Esophagus muscularis mucosa (tissue), 4 donors: ENCODE measurements at regions of chr11 and their contacts with region 1.

Region 1: GRCh38 chr11:30196400-30197206 is 34.2 kb upstream of the FSHB start:
- DNase-seq: no peak
- H3K4me3 ChIP-seq: no peak overlapping the region
- H3K27ac ChIP-seq: no peak overlapping the region
- H3K4me1 ChIP-seq: peaks cover 0 to 14% (median 2%) of the 10 kb centered on the region in 4 donors
- H3K27me3 ChIP-seq: no peaks in the 10 kb centered on the region
- CTCF ChIP-seq: peak; percentile 57 to 80 (median 77)
- EP300 ChIP-seq: no peak
- POLR2A ChIP-seq: no peak

Region 2: GRCh38 chr11:29432719-29433325 is 763.8 kb before region 1 on chr11:
- intact Hi-C with region 1: loop called (anchors 10 kb)
- DNase-seq: no peak
- H3K4me3 ChIP-seq: no peak overlapping the region
- H3K27ac ChIP-seq: no peak overlapping the region
- H3K4me1 ChIP-seq: no peaks in the 10 kb centered on the region
- H3K27me3 ChIP-seq: no peaks in the 10 kb centered on the region
- CTCF ChIP-seq: peak; percentile 41 to 55 (median 53)
- EP300 ChIP-seq: no peak
- POLR2A ChIP-seq: no peak

Region 3: DNA sequence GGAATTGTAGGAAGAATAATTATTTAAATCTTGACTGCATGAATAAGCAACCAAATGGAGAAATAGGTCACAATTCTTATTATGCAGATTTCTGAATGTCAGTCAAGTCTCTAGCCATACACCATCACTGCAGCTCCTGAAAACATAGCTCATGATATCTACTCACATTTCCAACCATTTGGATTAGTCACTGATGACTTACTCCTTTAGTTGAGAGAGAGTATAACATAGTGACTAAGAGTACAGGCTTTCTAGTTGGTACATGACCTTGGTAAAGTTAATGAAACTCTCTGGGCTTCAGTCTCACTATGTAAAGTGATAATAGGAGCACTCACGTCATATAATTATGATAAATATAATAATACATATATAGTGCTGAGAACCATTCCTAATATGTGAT is 445.0 kb before region 1 on chr11:
- intact Hi-C with region 1: no loop called
- DNase-seq: no peak
- H3K4me3 ChIP-seq: no peak overlapping the region
- H3K27ac ChIP-seq: no peak overlapping the region
- H3K4me1 ChIP-seq: no peaks in the 10 kb centered on the region
- H3K27me3 ChIP-seq: no peaks in the 10 kb centered on the region
- CTCF ChIP-seq: no peak
- EP300 ChIP-seq: no peak
- POLR2A ChIP-seq: no peak

Region 4: DNA sequence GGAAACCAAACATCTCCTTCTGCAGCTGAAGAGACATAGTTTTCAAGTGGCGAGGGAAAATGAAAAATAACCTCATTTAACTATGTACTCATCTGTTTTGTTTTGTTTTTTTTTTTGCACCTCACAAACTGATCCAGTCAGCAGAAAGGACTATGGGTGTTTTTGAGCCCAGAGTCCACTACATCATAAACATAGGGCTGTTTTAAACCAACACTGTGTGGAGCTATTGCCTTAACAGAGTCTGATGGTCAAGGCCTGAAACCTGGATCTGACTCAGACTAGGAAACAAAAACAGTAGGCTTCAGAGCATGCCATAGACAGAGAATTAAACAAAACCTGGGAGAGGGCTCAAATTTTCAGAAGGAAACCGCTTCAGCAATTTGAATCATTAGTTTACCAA is 65.1 kb before region 1 on chr11:
- intact Hi-C with region 1: loop called (anchors 2 kb)
- DNase-seq: no peak
- H3K4me3 ChIP-seq: no peak overlapping the region
- H3K27ac ChIP-seq: no peak overlapping the region
- H3K4me1 ChIP-seq: peaks cover 0 to 5% (median 0%) of the 10 kb centered on the region in 4 donors
- H3K27me3 ChIP-seq: no peaks in the 10 kb centered on the region
- CTCF ChIP-seq: peak; percentile 15 to 45 (median 18)
- EP300 ChIP-seq: no peak
- POLR2A ChIP-seq: no peak

Region 5: DNA sequence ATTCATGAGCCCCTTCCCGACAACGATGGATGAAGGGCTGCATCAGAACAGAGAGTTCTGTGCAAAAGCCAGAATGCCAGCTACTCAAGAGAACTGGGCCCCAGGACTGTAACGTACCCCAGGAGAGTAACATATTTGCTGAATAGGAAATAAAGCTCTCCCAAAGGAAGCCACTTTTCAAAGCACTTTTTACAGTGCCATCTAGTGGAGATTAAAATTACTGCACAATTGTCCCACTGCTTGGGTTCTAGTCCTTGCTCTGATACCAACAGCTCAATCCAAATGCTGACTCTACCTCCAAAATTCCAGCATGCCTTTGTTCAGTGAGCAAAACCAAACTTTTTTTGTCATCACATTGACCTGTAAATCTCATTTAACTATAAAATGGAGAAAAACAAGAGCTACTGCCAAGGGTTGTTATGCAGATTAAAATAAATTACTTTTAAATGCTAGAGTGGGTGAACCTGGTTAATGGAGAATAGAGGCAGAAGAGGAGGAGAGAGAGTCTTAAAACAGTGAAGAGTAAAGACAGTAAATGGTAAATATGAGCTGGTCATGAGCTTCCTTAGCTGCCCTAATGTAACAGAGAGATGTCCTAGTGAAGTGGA is 53.4 kb before region 1 on chr11:
- intact Hi-C with region 1: no loop called
- DNase-seq: no peak
- H3K4me3 ChIP-seq: no peak overlapping the region
- H3K27ac ChIP-seq: no peak overlapping the region
- H3K4me1 ChIP-seq: no peaks in the 10 kb centered on the region
- H3K27me3 ChIP-seq: no peaks in the 10 kb centered on the region
- CTCF ChIP-seq: peak; percentile 44 to 70 (median 57)
- EP300 ChIP-seq: no peak
- POLR2A ChIP-seq: no peak

Region 6: DNA sequence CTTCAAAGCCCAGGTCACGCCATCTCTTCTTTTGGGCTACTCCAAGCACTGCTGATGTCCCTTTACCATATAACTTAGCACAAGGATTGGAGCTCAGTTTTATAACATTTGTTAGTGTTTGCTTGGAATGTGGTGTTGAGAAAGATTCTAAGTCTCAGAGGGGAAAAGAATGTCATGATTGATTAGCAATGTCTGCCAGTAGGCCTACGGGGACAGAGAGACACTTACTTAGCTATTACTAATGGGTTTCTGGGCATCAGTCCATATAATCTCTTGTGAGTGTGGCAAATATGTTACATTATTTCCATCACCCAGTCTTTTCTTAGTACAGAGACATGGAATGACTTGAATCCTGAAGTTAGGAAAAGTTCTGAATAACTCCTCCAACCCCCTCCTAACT is 41.2 kb before region 1 on chr11:
- intact Hi-C with region 1: no loop called
- DNase-seq: no peak
- H3K4me3 ChIP-seq: no peak overlapping the region
- H3K27ac ChIP-seq: peak overlapping the region in 2 of 4 donors; percentile 29 to 44
- H3K4me1 ChIP-seq: peaks cover 0 to 40% (median 16%) of the 10 kb centered on the region in 4 donors
- H3K27me3 ChIP-seq: no peaks in the 10 kb centered on the region
- CTCF ChIP-seq: no peak
- EP300 ChIP-seq: no peak
- POLR2A ChIP-seq: no peak